OCI-LY7 (cell line): ENCODE measurements at regions of chr13 and their contacts with region 1.

Region 1: DNA sequence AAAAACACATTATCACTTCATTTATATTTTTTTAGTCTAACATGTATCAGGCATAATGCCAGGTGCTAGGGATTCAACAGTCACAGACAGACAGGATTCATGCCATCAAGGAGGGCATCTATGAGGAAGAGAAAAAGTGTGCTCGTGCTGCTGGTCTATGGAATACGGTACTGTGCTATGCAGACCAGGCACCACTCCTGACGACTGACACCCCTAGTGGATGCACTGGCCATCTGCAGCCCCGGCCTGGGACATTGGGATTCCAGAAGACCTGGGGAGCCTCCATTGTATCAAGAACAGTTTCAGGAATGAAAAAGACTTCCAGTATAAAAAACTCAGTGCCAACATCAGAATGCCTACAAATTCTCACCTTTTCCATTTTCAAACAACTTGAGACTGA is 94.0 kb downstream of the KLF12 start:
- DNase-seq: peak; percentile 79
- H3K4me3 ChIP-seq: no peak overlapping the region
- H3K27ac ChIP-seq: no peak overlapping the region
- H3K4me1 ChIP-seq: peaks cover 24% of the 10 kb centered on the region
- CTCF ChIP-seq: peak; percentile 92

Region 2: GRCh38 chr13:73765651-73766384 is 274.4 kb before region 1 on chr13:
- CTCF ChIA-PET with region 1: no interaction called
- POLR2A ChIA-PET with region 1: no interaction called
- intact Hi-C with region 1: loop called (anchors 10 kb)
- DNase-seq: peak; percentile 88
- H3K4me3 ChIP-seq: peak overlapping the region; percentile 52
- H3K27ac ChIP-seq: peak overlapping the region; percentile 80
- H3K4me1 ChIP-seq: peaks cover 32% of the 10 kb centered on the region
- CTCF ChIP-seq: no peak

Region 3: GRCh38 chr13:73835138-73835721 is 205.0 kb before region 1 on chr13:
- CTCF ChIA-PET with region 1: no interaction called
- POLR2A ChIA-PET with region 1: interaction called, 3 read pairs
- intact Hi-C with region 1: loop called (anchors 5 kb)
- DNase-seq: peak; percentile 73
- H3K4me3 ChIP-seq: no peak overlapping the region
- H3K27ac ChIP-seq: no peak overlapping the region
- H3K4me1 ChIP-seq: peaks cover 14% of the 10 kb centered on the region
- CTCF ChIP-seq: peak; percentile 88

Region 4: DNA sequence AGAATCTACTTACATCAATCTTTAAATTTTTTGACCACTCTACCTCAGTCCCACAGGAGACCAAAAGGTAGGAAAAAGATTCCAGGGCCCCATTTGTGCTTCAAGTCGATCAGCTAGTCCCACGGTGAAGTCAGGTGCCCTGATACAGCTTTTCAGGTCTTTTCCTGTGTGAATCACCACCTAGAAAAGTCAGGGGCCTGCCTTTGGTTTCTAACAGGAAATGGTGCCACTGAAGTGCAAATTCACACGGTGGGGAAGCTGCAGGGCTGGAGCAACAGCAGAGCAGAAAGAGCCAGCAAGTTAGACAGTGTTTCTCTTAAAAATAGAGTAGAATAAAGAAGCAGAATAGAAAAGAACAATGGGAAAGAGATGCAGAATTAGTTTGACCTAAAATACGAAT is 13.4 kb before region 1 on chr13:
- CTCF ChIA-PET with region 1: no interaction called
- POLR2A ChIA-PET with region 1: interaction called, 21 read pairs
- intact Hi-C with region 1: no loop called
- DNase-seq: peak; percentile 82
- H3K4me3 ChIP-seq: peak overlapping the region; percentile 56
- H3K27ac ChIP-seq: peak overlapping the region; percentile 83
- H3K4me1 ChIP-seq: peaks cover 48% of the 10 kb centered on the region
- CTCF ChIP-seq: no peak

Region 5: DNA sequence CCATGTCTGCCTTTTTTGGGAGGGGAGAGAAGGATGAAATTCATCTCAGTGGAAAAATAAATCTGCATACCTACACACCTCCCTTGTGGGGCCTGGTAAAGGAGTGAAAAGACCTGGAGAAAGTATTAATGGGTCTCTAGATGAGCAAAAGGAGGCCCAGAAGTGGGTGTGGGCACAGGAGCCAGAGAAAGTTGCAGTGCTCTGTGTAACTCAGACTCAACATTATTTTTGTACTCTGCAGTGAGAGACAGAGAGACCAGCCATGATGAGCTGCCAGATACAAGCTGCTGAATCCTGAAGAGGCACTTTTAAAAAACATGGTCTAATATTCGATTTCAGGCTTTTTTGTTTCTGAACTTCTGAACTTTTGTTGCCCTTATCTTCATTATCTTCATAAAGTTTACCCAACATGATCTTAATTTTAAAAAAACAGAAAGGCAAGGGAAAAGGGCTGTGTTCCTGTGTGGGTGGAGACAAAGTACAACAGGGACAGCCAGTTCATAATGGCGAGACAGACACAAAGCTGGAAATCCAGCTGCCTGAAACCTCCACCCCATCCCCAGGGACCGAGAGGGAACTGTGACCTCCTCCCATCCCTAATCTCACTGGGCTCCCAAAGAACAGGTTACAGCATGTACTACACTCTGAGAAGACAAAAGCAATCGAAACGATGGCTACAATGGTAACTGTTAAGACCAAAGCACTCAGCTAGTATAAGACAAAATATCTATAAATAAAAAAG is 16.8 kb after region 1 on chr13:
- CTCF ChIA-PET with region 1: no interaction called
- POLR2A ChIA-PET with region 1: interaction called, 12 read pairs
- intact Hi-C with region 1: no loop called
- DNase-seq: no peak
- H3K4me3 ChIP-seq: no peak overlapping the region
- H3K27ac ChIP-seq: peak overlapping the region; percentile 13
- H3K4me1 ChIP-seq: peaks cover 50% of the 10 kb centered on the region
- CTCF ChIP-seq: no peak

Region 6: GRCh38 chr13:74153316-74153715 is 113.1 kb after region 1 on chr13:
- CTCF ChIA-PET with region 1: no interaction called
- POLR2A ChIA-PET with region 1: no interaction called
- intact Hi-C with region 1: no loop called
- DNase-seq: no peak
- H3K4me3 ChIP-seq: no peak overlapping the region
- H3K27ac ChIP-seq: no peak overlapping the region
- H3K4me1 ChIP-seq: no peaks in the 10 kb centered on the region
- CTCF ChIP-seq: no peak